ENCODE measurements at regions of chr7 and their contacts with region 1.

Region 1: GRCh38 chr7:44189286-44189992 is at the start of gene GCK:
- DNase-seq: no peak
- ATAC-seq: no peak
- H3K4me3 ChIP-seq: peak within 1 kb of the TSS in 1 of 3 experiments; percentile 11; a peak in 1 of 6 replicates
- H3K27ac ChIP-seq: no peak within 1 kb of the TSS
- H3K4me1 ChIP-seq: peaks cover 8% of the 10 kb centered on the region; the same call in 1 of the 2 replicates
- H3K27me3 ChIP-seq: peaks cover 2 to 9% of the 10 kb centered on the region in 2 experiments; a peak in 2 of 5 replicates
- CTCF ChIP-seq: no peak
- EP300 ChIP-seq: no peak
- POLR2A ChIP-seq: no peak
- RAD21 ChIP-seq: no peak
- total RNA-seq, gene GCK: not detected in 2 replicates

Region 2: DNA sequence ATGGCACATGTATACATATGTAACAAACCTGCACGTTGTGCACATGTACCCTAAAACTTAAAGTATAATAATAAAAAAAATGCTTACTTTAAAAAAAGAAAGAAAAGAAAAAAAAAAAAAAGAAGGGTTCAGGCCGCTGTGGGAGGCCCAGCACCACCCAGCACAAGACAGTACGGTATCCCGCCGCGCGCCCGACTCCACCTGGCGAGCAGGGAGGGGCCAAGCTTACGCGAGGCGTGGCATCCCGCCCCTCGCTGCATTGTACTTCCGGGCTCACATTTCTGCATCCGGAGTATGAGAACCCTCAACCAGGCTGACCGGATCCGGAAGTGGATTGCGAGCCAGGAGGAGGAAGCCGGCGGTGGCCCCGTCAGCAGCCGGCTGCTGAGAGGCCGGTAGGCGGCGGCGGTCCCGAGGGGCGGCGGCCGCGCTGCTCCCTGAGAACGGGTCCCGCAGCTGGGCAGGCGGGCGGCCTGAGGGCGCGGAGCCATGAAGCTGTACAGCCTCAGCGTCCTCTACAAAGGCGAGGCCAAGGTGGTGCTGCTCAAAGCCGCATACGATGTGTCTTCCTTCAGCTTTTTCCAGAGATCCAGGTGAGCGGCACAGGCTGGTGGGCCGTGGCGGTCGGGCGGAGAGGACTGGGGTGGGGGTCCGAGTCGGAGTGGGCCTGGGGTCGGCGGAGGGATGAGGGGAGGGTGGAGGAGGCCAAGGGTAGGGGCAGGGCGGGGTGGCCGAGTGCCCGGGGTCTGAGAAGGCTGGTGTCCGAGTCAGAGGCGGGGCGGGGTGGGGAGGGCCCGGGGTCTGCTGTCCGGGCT is 11.4 kb after region 1 on chr7 and contains the start of gene YKT6:
- CTCF ChIA-PET with region 1: no interaction called
- POLR2A ChIA-PET with region 1: no interaction called
- in situ Hi-C with region 1: no loop called
- intact Hi-C with region 1: no loop called
- DNase-seq: peak; percentile 95
- ATAC-seq: peak; percentile 99
- H3K4me3 ChIP-seq: peak within 1 kb of the TSS; percentile 87 to 100 (median 98)
- H3K27ac ChIP-seq: peak within 1 kb of the TSS; percentile 63
- H3K4me1 ChIP-seq: peaks cover 9% of the 10 kb centered on the region
- H3K27me3 ChIP-seq: no peaks in the 10 kb centered on the region; a peak in 2 of 5 replicates
- CTCF ChIP-seq: peak; percentile 62
- EP300 ChIP-seq: no peak
- POLR2A ChIP-seq: peak; percentile 65 to 79
- RAD21 ChIP-seq: peak; percentile 48; the same call in 1 of the 2 replicates
- total RNA-seq, gene YKT6: 52.2 and 59.0 TPM in 2 replicates

Region 3: DNA sequence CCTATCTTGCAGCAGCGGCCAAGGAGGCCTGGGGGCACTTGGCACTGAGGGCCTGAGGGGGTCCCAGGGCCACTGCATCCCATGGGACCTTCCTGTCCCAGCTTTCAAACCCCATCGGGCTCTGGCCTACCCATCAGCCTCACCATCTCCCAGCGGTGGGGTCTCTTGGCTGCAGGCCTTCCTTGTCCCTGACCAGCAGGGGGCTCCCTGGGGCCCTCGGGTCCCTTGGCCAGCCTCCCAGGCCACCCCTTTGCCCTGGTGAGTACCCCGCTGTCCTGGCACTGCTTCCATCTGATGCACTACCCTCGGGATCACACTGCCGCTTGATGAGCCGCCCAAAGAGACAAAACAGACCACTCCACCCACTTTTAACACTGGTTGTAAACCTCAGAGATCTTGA is 54.8 kb after region 1 on chr7:
- CTCF ChIA-PET with region 1: no interaction called
- POLR2A ChIA-PET with region 1: no interaction called
- in situ Hi-C with region 1: no loop called
- intact Hi-C with region 1: no loop called
- DNase-seq: no peak
- ATAC-seq: peak; percentile 41
- H3K4me3 ChIP-seq: no peak overlapping the region
- H3K27ac ChIP-seq: no peak overlapping the region
- H3K4me1 ChIP-seq: no peaks in the 10 kb centered on the region
- H3K27me3 ChIP-seq: peaks cover 7 to 37% of the 10 kb centered on the region in 2 experiments; a peak in 4 of 5 replicates
- CTCF ChIP-seq: peak; percentile 63
- EP300 ChIP-seq: no peak
- POLR2A ChIP-seq: no peak
- RAD21 ChIP-seq: no peak

Region 4: GRCh38 chr7:45122975-45123860 is 933.8 kb after region 1 on chr7:
- CTCF ChIA-PET with region 1: no interaction called
- POLR2A ChIA-PET with region 1: no interaction called
- in situ Hi-C with region 1: no loop called
- intact Hi-C with region 1: loop called (anchors 5 kb)
- DNase-seq: no peak
- ATAC-seq: peak; percentile 20; the same call in 2 of the 3 replicates
- H3K4me3 ChIP-seq: no peak overlapping the region
- H3K27ac ChIP-seq: no peak overlapping the region
- H3K4me1 ChIP-seq: peaks cover 13% of the 10 kb centered on the region; the same call in 1 of the 2 replicates
- H3K27me3 ChIP-seq: peaks cover 4 to 38% of the 10 kb centered on the region in 2 experiments; a peak in 4 of 5 replicates
- CTCF ChIP-seq: no peak
- EP300 ChIP-seq: no peak
- POLR2A ChIP-seq: no peak
- RAD21 ChIP-seq: no peak

Measured in HepG2 (cell line).